OCI-LY7 (cell line): ENCODE measurements at regions of chr14 and their contacts with region 1.

Region 1: GRCh38 chr14:61761959-61762786 is at the start of gene SNAPC1:
- DNase-seq: peak; percentile 100
- H3K4me3 ChIP-seq: peak within 1 kb of the TSS; percentile 92
- H3K27ac ChIP-seq: peak within 1 kb of the TSS; percentile 74
- H3K4me1 ChIP-seq: peaks cover 36% of the 10 kb centered on the region
- CTCF ChIP-seq: no peak
- total RNA-seq, gene SNAPC1: 10.5 and 11.7 TPM in 2 replicates

Region 2: GRCh38 chr14:61719344-61720293 is 42.6 kb before region 1 on chr14:
- CTCF ChIA-PET with region 1: interaction called, 3 read pairs
- POLR2A ChIA-PET with region 1: interaction called, 12 read pairs
- intact Hi-C with region 1: no loop called
- DNase-seq: peak; percentile 63
- H3K4me3 ChIP-seq: peak overlapping the region; percentile 62
- H3K27ac ChIP-seq: peak overlapping the region; percentile 88
- H3K4me1 ChIP-seq: peaks cover 68% of the 10 kb centered on the region
- CTCF ChIP-seq: no peak

Region 3: DNA sequence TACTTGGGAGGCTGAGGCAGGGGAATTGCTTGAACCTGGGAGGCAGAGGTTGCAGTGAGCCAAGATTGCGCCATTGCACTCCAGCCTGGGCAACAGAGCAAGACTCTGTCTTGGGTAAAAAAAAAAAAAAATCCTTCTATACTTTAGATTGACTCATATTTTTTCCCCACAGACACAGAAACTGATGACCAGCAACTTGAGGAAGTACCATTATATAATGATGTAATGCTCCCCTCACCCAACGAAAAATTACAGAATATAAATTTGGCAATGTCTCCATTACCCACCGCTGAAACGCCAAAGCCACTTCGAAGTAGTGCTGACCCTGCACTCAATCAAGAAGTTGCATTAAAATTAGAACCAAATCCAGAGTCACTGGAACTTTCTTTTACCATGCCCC is 24.3 kb before region 1 on chr14:
- CTCF ChIA-PET with region 1: interaction called, 3 read pairs
- POLR2A ChIA-PET with region 1: interaction called, 14 read pairs
- intact Hi-C with region 1: no loop called
- DNase-seq: no peak
- H3K4me3 ChIP-seq: no peak overlapping the region
- H3K27ac ChIP-seq: no peak overlapping the region
- H3K4me1 ChIP-seq: peaks cover 8% of the 10 kb centered on the region
- CTCF ChIP-seq: no peak

Region 4: DNA sequence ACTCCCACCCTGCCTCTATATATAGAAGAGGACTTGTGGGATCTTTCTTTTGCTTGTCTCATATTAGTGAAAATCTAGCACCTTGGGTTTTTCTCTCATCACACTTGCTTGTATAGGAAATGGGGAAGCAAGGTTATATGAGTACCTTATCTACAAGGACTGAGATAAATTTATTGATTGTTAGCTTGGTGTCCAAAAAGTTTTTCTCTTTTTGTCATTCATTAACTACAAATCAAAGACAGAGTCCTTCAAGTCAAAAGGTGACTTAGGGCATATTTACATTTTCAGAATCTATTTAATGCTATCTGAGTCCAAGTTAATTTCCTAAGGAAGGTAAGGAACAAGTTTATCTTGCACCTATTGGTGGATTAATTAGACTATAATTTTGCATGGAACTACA is 92.7 kb after region 1 on chr14:
- CTCF ChIA-PET with region 1: no interaction called
- POLR2A ChIA-PET with region 1: no interaction called
- intact Hi-C with region 1: no loop called
- DNase-seq: no peak
- H3K4me3 ChIP-seq: no peak overlapping the region
- H3K27ac ChIP-seq: no peak overlapping the region
- H3K4me1 ChIP-seq: no peaks in the 10 kb centered on the region
- CTCF ChIP-seq: no peak